ENCODE measurements at regions of chr18 and their contacts with region 1.

Region 1: DNA sequence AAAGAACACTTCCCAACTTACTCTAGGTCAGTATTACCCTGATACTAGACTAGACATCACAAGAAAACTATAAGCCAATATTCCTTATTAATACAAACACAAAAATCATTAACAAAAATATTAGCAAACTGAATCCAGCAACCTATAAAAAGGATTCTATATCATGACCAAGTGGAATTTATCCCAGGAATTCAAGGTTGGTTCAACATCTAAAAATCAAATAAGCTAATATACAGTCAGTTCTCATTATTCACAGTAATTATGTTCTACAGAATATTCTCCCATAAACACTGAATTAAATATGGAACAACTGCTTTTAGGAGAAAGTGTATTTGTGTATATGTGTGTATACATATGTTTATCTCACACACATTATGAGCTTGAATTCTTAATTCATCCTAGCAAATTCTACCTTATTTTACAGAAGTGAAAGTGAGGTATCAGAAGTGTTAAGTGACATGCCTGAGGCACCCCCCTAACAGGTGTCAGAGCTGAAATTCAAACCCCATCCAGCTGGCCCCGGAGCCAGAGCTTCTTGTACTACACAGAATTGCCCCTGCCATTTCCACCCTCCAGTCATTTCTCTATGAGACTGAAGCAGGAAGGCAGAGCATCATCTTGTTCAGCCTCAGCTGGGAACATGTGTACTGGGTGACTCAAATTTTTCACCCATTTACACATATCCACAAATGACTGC is 77.8 kb downstream of the MALT1 start:
- DNase-seq: no peak
- H3K4me3 ChIP-seq: no peak overlapping the region
- H3K27ac ChIP-seq: no peak overlapping the region
- H3K4me1 ChIP-seq: no peaks in the 10 kb centered on the region
- H3K27me3 ChIP-seq: no peaks in the 10 kb centered on the region
- CTCF ChIP-seq: no peak

Region 2: GRCh38 chr18:58569490-58569911 is 179.5 kb before region 1 on chr18:
- CTCF ChIA-PET with region 1: no interaction called
- POLR2A ChIA-PET with region 1: interaction called, 32 read pairs
- intact Hi-C with region 1: no loop called
- DNase-seq: no peak
- H3K4me3 ChIP-seq: no peak overlapping the region
- H3K27ac ChIP-seq: no peak overlapping the region
- H3K4me1 ChIP-seq: peaks cover 6% of the 10 kb centered on the region; the same call in 1 of the 2 replicates
- H3K27me3 ChIP-seq: no peaks in the 10 kb centered on the region
- CTCF ChIP-seq: no peak

Measured in PC-9 (cell line).